ENCODE measurements at regions of chr21 and their contacts with region 1.

Region 1: DNA sequence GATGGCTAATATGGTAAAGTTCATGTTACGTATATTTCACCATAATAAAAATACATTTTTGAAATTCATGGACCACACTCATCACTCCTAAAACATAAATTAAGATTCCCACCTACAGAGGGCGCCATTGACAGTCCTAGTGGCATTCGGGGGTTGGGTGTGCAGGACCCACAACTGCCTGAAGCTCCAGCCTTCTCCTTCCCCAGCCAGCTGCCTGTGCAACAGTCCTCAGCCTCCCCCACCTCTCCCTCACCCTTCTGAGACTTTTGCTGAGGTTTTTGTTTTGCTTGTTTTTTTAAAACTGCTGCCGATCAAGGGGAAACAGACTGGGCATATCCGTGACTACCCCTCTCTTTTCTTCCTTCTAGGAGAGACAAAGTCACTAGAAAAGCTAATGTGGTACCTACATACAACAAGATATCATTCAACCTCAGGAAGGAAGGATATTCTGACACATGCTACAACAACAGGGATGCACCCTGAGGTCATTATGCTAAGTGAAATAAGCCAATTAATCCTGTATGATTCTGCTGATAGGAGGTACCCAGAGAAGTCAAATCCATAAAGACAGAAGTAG is 9.2 kb upstream of the EVA1C start:
- DNase-seq: peak; percentile 59
- H3K4me3 ChIP-seq: no peak overlapping the region
- H3K27ac ChIP-seq: no peak overlapping the region
- H3K4me1 ChIP-seq: peaks cover 0 to 9% (median 4%) of the 10 kb centered on the region in 4 donors
- H3K27me3 ChIP-seq: peaks cover 12% of the 10 kb centered on the region
- CTCF ChIP-seq: peak; percentile 64 to 71 (median 65)
- EP300 ChIP-seq: no peak
- POLR2A ChIP-seq: no peak

Region 2: DNA sequence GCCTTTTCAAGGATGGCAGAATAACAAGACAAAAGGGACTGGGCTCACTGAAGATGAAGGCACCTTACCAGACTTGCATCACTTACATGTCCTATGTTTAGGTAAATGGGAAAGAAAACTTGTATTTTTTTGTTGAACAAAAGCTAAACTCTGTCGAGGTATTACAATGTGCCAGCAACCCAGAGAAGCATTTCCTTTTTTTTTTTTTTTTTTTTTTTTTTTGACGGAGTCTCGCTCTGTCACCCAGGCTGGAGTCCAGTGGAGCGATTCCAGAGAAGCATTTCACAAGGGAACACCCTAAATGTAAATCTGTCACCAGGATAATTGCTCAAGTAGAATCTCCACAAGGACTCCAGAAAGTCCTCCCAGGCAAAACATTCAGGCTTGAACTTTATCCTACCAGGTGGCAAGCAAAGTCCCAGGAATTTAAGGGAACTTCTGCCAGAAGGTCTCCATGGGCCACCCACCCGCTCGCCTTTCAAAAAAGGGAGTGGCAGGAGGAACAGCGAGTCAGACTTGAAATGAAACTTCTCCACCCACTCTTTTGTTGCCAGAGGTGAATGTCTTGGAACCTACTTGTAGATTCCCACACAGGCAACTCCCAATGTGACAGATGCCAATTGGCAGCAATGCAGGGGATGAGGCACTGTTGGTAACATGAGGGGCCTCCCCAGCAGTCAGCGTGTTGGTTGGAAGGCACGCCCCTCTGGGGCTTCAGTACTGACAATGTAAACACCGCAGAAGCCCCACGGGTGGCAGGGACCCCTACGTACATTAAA is 1184.3 kb before region 1 on chr21:
- in situ Hi-C with region 1: no loop called
- intact Hi-C with region 1: no loop called
- DNase-seq: peak; percentile 43
- H3K4me3 ChIP-seq: no peak overlapping the region
- H3K27ac ChIP-seq: peak overlapping the region; percentile 24 to 48 (median 42)
- H3K4me1 ChIP-seq: peaks cover 0 to 11% (median 4%) of the 10 kb centered on the region in 4 donors
- H3K27me3 ChIP-seq: no peaks in the 10 kb centered on the region
- CTCF ChIP-seq: no peak
- EP300 ChIP-seq: no peak
- POLR2A ChIP-seq: no peak

Region 3: GRCh38 chr21:32240851-32241687 is 162.2 kb before region 1 on chr21:
- in situ Hi-C with region 1: no loop called
- intact Hi-C with region 1: no loop called
- DNase-seq: no peak
- H3K4me3 ChIP-seq: no peak overlapping the region
- H3K27ac ChIP-seq: peak overlapping the region in 2 of 4 donors; percentile 23 to 46
- H3K4me1 ChIP-seq: peaks cover 0 to 3% (median 0%) of the 10 kb centered on the region in 4 donors
- H3K27me3 ChIP-seq: no peaks in the 10 kb centered on the region
- CTCF ChIP-seq: no peak
- EP300 ChIP-seq: no peak
- POLR2A ChIP-seq: no peak

Region 4: GRCh38 chr21:32569261-32570230 is 166.3 kb after region 1 on chr21:
- in situ Hi-C with region 1: loop called in 2 of 4 experiments (anchors 10 to 25 kb)
- intact Hi-C with region 1: no loop called
- DNase-seq: peak; percentile 83
- H3K4me3 ChIP-seq: peak overlapping the region; percentile 44 to 64 (median 45)
- H3K27ac ChIP-seq: peak overlapping the region; percentile 77 to 94 (median 84)
- H3K4me1 ChIP-seq: peaks cover 0 to 17% (median 11%) of the 10 kb centered on the region in 4 donors
- H3K27me3 ChIP-seq: no peaks in the 10 kb centered on the region
- CTCF ChIP-seq: peak; percentile 80 to 86 (median 83)
- EP300 ChIP-seq: no peak
- POLR2A ChIP-seq: peak; percentile 24

Region 5: DNA sequence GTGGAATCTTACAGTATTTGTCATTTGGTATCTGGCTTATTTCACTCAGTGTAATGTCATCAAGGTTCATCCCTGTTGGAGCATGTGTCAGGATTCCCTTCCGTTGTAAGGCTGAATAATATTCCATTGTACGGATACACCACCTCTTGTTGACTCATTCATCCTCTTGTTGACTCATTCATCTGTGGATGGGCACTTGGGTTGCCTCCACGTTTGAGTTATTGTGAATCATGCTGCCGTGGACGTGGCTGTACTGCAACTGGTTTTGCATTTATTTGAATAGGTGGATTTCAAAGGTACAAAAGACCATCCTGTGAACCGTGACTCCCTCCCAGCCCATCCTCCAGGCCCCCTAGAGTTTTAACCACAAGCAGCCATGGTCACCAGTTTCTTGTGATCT is 193.9 kb after region 1 on chr21:
- in situ Hi-C with region 1: loop called in 3 of 4 experiments (anchors 10 kb)
- intact Hi-C with region 1: loop called (anchors 2 kb)
- DNase-seq: no peak
- H3K4me3 ChIP-seq: no peak overlapping the region
- H3K27ac ChIP-seq: no peak overlapping the region
- H3K4me1 ChIP-seq: no peaks in the 10 kb centered on the region
- H3K27me3 ChIP-seq: no peaks in the 10 kb centered on the region
- CTCF ChIP-seq: no peak
- EP300 ChIP-seq: no peak
- POLR2A ChIP-seq: no peak

Region 6: DNA sequence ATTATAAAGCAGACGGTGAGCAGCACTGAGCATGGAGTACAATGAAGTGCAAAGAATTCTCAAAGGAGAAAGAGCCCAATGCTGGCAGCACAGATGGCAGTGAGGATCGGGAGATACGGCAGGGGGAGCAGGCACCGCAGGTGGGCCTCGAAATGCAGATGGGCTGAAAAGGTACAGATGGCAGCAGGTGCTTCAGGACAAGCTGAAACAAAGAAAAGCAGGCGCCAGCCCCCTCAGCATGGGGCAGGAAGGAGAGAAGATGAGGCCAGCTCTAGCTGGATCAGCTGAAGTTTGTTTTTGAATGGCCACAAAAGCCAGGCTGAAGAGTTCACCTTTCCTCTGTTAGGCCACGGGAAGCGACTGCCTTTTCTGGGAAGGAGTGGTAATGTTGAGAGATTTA is 201.2 kb after region 1 on chr21:
- in situ Hi-C with region 1: loop called in 3 of 4 experiments (anchors 10 kb)
- intact Hi-C with region 1: loop called (anchors 2 kb)
- DNase-seq: no peak
- H3K4me3 ChIP-seq: no peak overlapping the region
- H3K27ac ChIP-seq: no peak overlapping the region
- H3K4me1 ChIP-seq: no peaks in the 10 kb centered on the region
- H3K27me3 ChIP-seq: no peaks in the 10 kb centered on the region
- CTCF ChIP-seq: no peak
- EP300 ChIP-seq: no peak
- POLR2A ChIP-seq: no peak

Region 7: DNA sequence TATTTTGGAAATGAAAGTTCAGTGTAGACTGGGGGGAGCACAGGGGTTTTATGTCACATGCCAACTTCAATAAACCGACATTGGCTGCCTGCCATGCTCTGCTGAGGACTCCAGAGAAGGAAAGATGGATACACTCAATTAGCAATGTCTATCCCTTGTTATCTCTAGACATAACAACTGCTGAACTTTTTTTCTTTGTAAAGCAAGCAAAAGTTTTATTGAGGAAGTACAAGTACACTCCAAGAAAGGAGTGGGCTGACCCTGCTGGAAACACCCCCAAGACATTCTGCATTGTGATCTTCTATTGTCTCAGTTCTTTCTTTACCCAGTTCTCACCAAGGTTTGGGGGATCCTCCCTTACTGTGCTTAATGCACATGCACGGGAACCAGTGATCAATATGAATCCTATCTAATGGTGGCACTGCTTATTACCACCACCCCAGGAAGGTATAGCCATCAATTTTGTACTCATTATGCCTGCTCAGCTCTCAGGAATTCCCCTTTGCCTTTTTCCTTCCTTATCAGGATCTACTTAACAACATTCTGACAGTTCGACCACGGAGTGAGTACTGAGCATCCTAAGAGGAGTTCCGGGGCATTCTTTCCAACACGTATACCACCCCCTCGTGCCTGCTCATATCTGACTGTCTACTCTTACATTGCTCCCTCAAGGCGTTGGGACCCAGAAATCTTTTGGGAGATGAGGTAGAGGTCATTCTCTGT is 295.8 kb after region 1 on chr21:
- in situ Hi-C with region 1: no loop called
- intact Hi-C with region 1: no loop called
- DNase-seq: peak; percentile 72
- H3K4me3 ChIP-seq: no peak overlapping the region
- H3K27ac ChIP-seq: peak overlapping the region; percentile 17 to 61 (median 50)
- H3K4me1 ChIP-seq: peaks cover 0 to 21% (median 8%) of the 10 kb centered on the region in 4 donors
- H3K27me3 ChIP-seq: no peaks in the 10 kb centered on the region
- CTCF ChIP-seq: no peak
- EP300 ChIP-seq: no peak
- POLR2A ChIP-seq: no peak

Region 8: DNA sequence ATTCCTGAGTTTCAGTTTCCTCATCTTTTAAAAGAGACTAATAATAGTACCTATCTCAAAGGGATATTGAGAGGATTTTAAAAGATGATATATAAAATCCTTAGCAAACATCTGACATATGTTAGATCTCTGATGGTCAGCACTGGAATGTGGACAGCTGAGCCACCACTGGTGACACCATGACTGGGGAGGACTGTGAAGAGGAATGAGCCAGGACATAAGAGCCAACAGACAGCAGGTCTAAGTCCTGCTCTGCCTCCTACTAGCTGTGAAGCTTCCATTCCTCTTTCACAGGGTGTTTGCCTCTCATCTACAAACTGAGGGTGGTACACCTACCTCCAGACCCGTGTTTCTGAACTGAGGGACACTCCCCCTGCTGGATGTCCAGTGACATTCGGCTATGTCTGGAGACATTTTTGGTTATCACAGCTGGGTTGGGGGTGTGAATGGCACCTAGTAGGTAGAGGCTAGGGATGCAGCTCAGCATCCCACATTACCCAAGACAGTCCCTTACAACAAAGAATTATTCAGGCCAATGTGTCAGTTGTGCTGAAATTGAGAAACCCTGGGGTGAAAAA is 513.3 kb after region 1 on chr21:
- in situ Hi-C with region 1: no loop called
- intact Hi-C with region 1: no loop called
- DNase-seq: no peak
- H3K4me3 ChIP-seq: no peak overlapping the region
- H3K27ac ChIP-seq: no peak overlapping the region
- H3K4me1 ChIP-seq: peaks cover 0 to 4% (median 0%) of the 10 kb centered on the region in 4 donors
- H3K27me3 ChIP-seq: no peaks in the 10 kb centered on the region
- CTCF ChIP-seq: no peak
- EP300 ChIP-seq: no peak
- POLR2A ChIP-seq: no peak

Measured in transverse colon (tissue), 4 donors.